Cardiac septum (tissue), 1 donor: ENCODE measurements at regions of chr10 and their contacts with region 1.

Region 1: DNA sequence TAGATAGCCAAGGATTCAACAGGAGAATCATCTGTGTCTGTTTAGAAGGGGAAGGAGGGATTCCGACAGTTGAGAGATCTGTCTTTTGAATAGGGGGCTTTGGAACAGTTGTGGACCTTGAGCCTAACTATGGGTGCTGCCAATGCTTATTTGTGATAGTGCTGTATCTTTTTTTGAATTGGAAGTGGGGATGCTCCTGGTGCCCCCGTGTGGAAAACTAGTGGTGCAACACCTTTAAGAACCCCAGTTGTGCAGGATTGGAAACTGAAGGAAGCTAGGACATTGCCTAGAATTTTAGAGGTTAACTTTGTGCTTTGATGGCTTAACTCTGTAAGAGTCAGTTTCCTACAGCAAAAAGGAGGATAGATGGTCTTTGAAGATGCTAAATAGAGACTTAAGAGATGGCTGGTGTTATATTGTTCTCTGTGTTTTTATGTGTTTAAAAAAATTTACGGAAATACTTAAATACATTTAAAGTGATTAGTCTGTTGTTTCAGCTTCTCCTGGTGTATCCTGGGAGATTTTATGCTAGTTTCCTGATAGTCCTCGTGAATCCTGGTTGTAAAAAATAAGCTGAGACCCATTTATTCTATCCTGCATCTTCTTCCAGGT is 69.3 kb downstream of the AP3M1 start:
- DNase-seq: no peak

Region 2: DNA sequence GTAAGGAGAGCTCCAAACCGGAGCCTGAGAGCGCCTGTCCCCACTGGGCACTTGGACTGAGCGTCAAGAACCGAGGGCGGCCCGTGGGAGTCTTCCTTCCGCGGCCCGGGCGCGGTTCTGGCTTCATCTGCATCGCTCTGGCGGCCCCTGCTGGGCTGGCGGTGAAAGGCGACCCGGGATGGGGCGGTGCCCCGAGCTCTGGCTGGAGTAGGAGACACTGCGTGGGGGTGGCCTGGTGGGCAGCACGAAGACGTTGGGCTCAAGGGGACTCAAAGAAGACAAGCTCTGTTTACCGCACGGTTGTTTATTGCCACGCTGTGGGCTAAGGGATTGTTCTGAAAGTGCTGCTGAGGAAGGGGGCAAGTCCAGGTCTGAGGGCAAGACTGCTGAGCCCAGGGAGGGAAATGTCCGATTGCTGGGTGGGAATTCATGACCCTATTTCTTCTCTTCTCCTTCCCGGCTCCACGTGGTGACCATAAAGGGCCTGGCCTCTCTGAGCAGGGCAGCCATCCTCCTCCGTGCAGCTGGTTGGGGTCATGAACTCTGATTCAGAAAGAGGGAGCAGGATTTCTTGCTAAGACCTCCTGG is 140.6 kb before region 1 on chr10:
- intact Hi-C with region 1: loop called (anchors 10 kb)
- DNase-seq: peak; percentile 95

Region 3: DNA sequence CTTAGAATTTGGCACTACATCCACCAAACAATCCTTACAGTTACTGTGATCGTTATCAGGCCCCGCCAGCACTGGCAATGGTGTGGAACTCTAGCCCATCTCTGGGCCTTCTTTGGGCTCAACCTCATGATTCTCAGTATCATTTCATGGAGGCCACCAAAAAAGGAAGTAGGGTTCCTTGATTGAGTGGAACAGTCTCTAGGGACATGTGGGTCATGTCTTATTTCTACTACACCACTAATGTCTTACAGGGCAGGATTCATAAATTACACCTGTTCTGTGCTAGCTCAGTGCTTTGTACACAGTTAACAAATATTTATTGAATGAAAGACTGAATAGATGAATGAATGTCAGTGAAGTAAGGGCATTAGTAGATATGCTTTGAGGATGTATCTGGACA is 15.5 kb after region 1 on chr10:
- intact Hi-C with region 1: no loop called
- DNase-seq: no peak